CD14-positive monocyte (primary cell): ENCODE measurements at regions of chr19 and their contacts with region 1.

Region 1: GRCh38 chr19:36850559-36851442 is at the start of gene ZNF345:
- DNase-seq: peak; percentile 81 to 89 (median 81)
- H3K4me3 ChIP-seq: peak within 1 kb of the TSS; percentile 67 to 98 (median 86)
- H3K4me3 Mint-ChIP-seq: no peak within 1 kb of the TSS
- H3K27ac ChIP-seq: peak within 1 kb of the TSS; percentile 63 to 86
- H3K27ac Mint-ChIP-seq: no peak within 1 kb of the TSS
- H3K4me1 ChIP-seq: peaks cover 16 to 31% of the 10 kb centered on the region in 2 donors
- H3K4me1 Mint-ChIP-seq: peaks cover 2% of the 10 kb centered on the region
- H3K27me3 ChIP-seq: no peaks in the 10 kb centered on the region
- H3K27me3 Mint-ChIP-seq: peaks cover 1 to 3% (median 3%) of the 10 kb centered on the region in 3 donors
- CTCF ChIP-seq: no peak
- polyA plus RNA-seq, gene ZNF345: 0.66 to 2.3 (median 1.3) TPM

Region 2: GRCh38 chr19:36489118-36489919 is 361.5 kb before region 1 on chr19 and contains the start of gene ZNF566:
- intact Hi-C with region 1: loop called in 1 of 2 experiments (anchors 10 kb)
- DNase-seq: peak; percentile 78 to 84 (median 84)
- H3K4me3 ChIP-seq: peak within 1 kb of the TSS; percentile 68 to 99 (median 92)
- H3K4me3 Mint-ChIP-seq: peak within 1 kb of the TSS; percentile 99
- H3K27ac ChIP-seq: peak within 1 kb of the TSS; percentile 64 to 89
- H3K27ac Mint-ChIP-seq: peak within 1 kb of the TSS; percentile 92 to 99 (median 96)
- H3K4me1 ChIP-seq: peaks cover 9 to 18% of the 10 kb centered on the region in 2 donors
- H3K4me1 Mint-ChIP-seq: peaks cover 19% of the 10 kb centered on the region
- H3K27me3 ChIP-seq: no peaks in the 10 kb centered on the region
- H3K27me3 Mint-ChIP-seq: no peaks in the 10 kb centered on the region
- CTCF ChIP-seq: no peak
- polyA plus RNA-seq, gene ZNF566: 0.95 to 3.9 (median 3.6) TPM

Region 3: GRCh38 chr19:36665832-36666231 is 185.0 kb before region 1 on chr19:
- intact Hi-C with region 1: loop called in 1 of 2 experiments (anchors 5 kb)
- DNase-seq: no peak
- H3K4me3 ChIP-seq: peak overlapping the region; percentile 58 to 85 (median 79)
- H3K4me3 Mint-ChIP-seq: peak overlapping the region; percentile 97 to 100
- H3K27ac ChIP-seq: no peak overlapping the region
- H3K27ac Mint-ChIP-seq: peak overlapping the region in 1 of 7 donors; percentile 16
- H3K4me1 ChIP-seq: peaks cover 8 to 14% of the 10 kb centered on the region in 2 donors
- H3K4me1 Mint-ChIP-seq: peaks cover 13% of the 10 kb centered on the region
- H3K27me3 ChIP-seq: no peaks in the 10 kb centered on the region
- H3K27me3 Mint-ChIP-seq: peaks cover 2 to 5% (median 3%) of the 10 kb centered on the region in 3 donors
- CTCF ChIP-seq: no peak

Region 4: DNA sequence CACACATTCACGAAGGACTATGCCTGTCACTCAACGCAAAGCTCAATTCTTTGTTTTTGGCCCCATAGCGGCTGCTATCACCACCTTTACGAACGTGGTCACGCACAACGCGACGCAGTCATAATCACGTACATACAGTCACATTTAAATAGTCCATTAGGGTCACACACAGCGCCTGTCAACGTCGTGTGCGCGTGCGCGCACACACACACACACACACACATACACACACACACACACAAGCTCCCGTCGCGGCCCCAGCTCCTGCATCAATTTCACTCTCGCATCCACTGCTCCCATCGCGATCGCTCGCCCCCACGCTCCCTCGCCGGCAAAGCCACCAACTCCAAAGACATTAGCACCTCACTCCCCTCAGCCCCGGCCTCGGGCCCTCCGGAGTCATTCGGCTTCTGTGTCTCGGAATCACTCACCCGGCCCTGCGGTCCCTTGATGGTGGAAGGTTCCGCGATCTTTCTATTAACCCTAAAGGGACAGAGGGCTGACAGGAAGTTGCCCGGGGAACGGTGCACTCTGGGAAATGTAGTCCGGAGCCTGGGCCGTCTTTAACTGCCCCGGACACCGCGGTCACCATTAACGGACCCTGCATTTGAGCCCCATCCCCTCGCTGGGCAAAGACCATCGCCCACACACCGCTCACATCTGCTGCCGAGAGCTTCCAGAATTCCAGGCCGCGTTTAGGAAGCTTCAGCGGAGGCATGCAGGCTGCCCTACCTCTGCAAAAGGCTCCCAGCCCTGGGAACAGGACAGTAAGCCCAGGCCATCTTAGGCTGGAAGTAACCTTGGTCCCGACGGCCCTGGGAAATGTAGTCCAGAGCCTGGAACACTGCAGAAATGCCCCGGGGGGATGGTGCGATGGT is 12.7 kb before region 1 on chr19 and contains the start of gene ZNF790:
- intact Hi-C with region 1: loop called in 1 of 2 experiments (anchors 1 kb)
- DNase-seq: peak; percentile 83 to 86 (median 84)
- H3K4me3 ChIP-seq: peak within 1 kb of the TSS; percentile 61 to 92 (median 64)
- H3K4me3 Mint-ChIP-seq: no peak within 1 kb of the TSS
- H3K27ac ChIP-seq: peak within 1 kb of the TSS; percentile 83 to 86
- H3K27ac Mint-ChIP-seq: no peak within 1 kb of the TSS
- H3K4me1 ChIP-seq: peaks cover 14 to 18% of the 10 kb centered on the region in 2 donors
- H3K4me1 Mint-ChIP-seq: no peaks in the 10 kb centered on the region
- H3K27me3 ChIP-seq: no peaks in the 10 kb centered on the region
- H3K27me3 Mint-ChIP-seq: no peaks in the 10 kb centered on the region
- CTCF ChIP-seq: no peak
- polyA plus RNA-seq, gene ZNF790: 0.35 to 2.7 (median 2.3) TPM

Region 5: GRCh38 chr19:36891768-36892357 is 41.1 kb after region 1 on chr19:
- intact Hi-C with region 1: no loop called
- DNase-seq: no peak
- H3K4me3 ChIP-seq: peak overlapping the region in 1 of 3 experiments; percentile 21
- H3K4me3 Mint-ChIP-seq: no peak overlapping the region
- H3K27ac ChIP-seq: no peak overlapping the region
- H3K27ac Mint-ChIP-seq: no peak overlapping the region
- H3K4me1 ChIP-seq: no peaks in the 10 kb centered on the region
- H3K4me1 Mint-ChIP-seq: no peaks in the 10 kb centered on the region
- H3K27me3 ChIP-seq: no peaks in the 10 kb centered on the region
- H3K27me3 Mint-ChIP-seq: no peaks in the 10 kb centered on the region
- CTCF ChIP-seq: no peak

Region 6: DNA sequence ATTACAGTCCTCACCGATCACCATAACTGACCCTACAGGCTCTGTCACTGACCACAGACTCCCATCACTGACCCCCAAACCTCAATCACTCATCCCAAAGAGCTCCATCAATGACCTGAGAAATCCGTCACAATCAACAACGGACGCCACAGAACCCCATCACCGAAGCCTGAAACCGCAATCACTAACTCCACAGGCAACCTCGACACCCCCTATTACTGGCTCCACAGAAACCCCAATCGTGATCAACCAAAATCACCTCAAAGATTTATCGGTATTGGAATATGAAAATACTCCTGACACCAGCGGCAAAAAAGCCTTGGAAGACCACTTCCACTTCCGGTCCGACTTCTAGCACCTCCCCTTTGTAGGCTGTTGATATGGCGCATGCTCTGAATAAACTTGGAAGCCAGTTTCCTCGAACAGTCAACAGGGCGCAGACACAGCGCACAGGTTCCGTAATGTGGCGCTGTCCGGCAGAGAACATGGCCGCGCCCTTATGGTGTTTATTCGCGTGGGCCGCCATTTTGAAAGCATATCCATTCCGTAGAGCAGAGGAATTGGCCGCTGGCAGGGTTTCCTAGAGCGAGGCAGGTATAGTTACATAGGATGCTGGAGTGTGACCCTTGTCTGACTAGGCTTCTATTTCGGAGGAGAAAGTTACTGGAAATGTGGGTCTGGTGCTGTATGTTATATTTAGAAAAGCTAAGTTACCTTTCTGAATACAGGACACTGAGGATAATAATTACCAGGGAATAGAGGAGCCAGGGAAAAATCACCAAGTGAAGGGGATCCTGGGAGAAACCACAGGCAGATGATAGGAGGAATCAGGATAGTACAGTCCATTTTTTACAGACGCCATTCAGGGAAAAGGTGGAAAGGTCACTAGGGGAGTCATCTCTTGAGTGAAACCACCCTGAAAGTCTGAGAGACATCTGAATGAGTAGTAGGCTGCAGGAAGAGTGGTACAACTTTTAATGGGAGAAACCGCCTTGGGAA is 321.9 kb after region 1 on chr19 and contains the start of gene ZNF585A:
- intact Hi-C with region 1: loop called (anchors 2 to 5 kb)
- DNase-seq: peak; percentile 94 to 98 (median 97)
- H3K4me3 ChIP-seq: peak within 1 kb of the TSS; percentile 70 to 100 (median 98)
- H3K4me3 Mint-ChIP-seq: no peak within 1 kb of the TSS
- H3K27ac ChIP-seq: peak within 1 kb of the TSS; percentile 46 to 87
- H3K27ac Mint-ChIP-seq: no peak within 1 kb of the TSS
- H3K4me1 ChIP-seq: peaks cover 5 to 17% of the 10 kb centered on the region in 2 donors
- H3K4me1 Mint-ChIP-seq: no peaks in the 10 kb centered on the region
- H3K27me3 ChIP-seq: no peaks in the 10 kb centered on the region
- H3K27me3 Mint-ChIP-seq: peaks cover 0 to 1% (median 0%) of the 10 kb centered on the region in 3 donors
- CTCF ChIP-seq: no peak
- polyA plus RNA-seq, gene ZNF585A: 6.4 to 25.5 (median 23.2) TPM